MCF 10A (cell line): ENCODE measurements at regions of chr1 and their contacts with region 1.

Region 1: DNA sequence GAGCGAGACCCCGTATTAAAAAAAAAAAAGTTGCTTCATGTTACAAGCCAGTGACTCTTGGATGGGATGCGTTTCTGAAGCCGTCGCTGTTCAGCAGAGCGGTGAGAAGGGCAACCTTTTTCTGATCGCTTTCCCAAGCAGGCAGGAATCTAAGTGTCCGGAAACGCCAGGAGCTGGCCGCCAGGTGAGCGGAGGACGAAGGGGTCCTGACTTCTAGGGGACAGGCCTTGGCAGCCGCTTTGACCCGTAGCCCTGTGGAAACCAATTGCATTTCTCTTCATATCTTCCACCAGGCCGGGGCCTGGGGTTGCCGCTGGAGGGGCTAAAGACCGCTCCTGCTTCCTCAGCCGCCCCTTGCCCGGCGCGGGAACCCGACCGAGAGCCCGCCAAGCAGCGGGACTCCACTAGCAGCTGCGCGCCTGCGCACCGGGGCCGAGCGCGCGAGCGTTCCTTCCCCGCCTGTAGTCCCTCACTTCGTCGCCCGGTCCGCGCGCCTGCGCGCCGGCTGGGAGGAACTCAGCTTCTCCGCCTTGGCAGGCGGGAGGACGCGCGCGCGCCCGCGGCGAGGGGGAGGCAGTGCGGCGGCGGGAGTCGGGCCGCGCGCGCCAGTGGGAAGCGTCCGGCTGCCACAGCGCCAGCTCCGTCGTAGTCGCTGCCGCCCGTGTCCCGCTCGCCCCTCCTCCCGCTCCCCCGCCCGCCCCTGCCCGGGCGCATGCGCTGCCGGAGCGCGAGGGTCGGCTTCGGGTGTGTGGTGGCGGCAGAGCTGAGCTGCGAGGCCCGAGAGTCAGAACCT is at the start of gene SPEN:
- DNase-seq: peak; percentile 97
- H3K4me3 Mint-ChIP-seq: peak within 1 kb of the TSS; percentile 82
- H3K27ac Mint-ChIP-seq: peak within 1 kb of the TSS; percentile 97
- H3K4me1 Mint-ChIP-seq: peaks cover 19% of the 10 kb centered on the region
- H3K27me3 Mint-ChIP-seq: no peaks in the 10 kb centered on the region
- CTCF ChIP-seq: no peak
- total RNA-seq, gene SPEN: 44.2 and 50.6 TPM in 2 replicates

Region 2: GRCh38 chr1:15627343-15627988 is 219.8 kb before region 1 on chr1:
- CTCF ChIA-PET with region 1: no interaction called
- POLR2A ChIA-PET with region 1: no interaction called
- intact Hi-C with region 1: no loop called
- DNase-seq: no peak
- H3K4me3 Mint-ChIP-seq: no peak overlapping the region
- H3K27ac Mint-ChIP-seq: no peak overlapping the region
- H3K4me1 Mint-ChIP-seq: peaks cover 22% of the 10 kb centered on the region
- H3K27me3 Mint-ChIP-seq: no peaks in the 10 kb centered on the region
- CTCF ChIP-seq: no peak

Region 3: GRCh38 chr1:15703562-15703961 is 143.7 kb before region 1 on chr1:
- CTCF ChIA-PET with region 1: no interaction called
- POLR2A ChIA-PET with region 1: no interaction called
- intact Hi-C with region 1: no loop called
- DNase-seq: peak; percentile 86
- H3K4me3 Mint-ChIP-seq: peak overlapping the region; percentile 29
- H3K27ac Mint-ChIP-seq: peak overlapping the region; percentile 96
- H3K4me1 Mint-ChIP-seq: peaks cover 20% of the 10 kb centered on the region
- H3K27me3 Mint-ChIP-seq: no peaks in the 10 kb centered on the region
- CTCF ChIP-seq: no peak

Region 4: GRCh38 chr1:15741183-15741850 is 106.0 kb before region 1 on chr1:
- CTCF ChIA-PET with region 1: no interaction called
- POLR2A ChIA-PET with region 1: no interaction called
- intact Hi-C with region 1: no loop called
- DNase-seq: peak; percentile 86
- H3K4me3 Mint-ChIP-seq: no peak overlapping the region
- H3K27ac Mint-ChIP-seq: no peak overlapping the region
- H3K4me1 Mint-ChIP-seq: peaks cover 7% of the 10 kb centered on the region
- H3K27me3 Mint-ChIP-seq: no peaks in the 10 kb centered on the region
- CTCF ChIP-seq: peak; percentile 92

Region 5: GRCh38 chr1:15797614-15798390 is 49.5 kb before region 1 on chr1:
- CTCF ChIA-PET with region 1: interaction called, 6 read pairs
- POLR2A ChIA-PET with region 1: interaction called, 75 read pairs
- intact Hi-C with region 1: loop called (anchors 5 kb)
- DNase-seq: peak; percentile 84
- H3K4me3 Mint-ChIP-seq: peak overlapping the region; percentile 61
- H3K27ac Mint-ChIP-seq: peak overlapping the region; percentile 93
- H3K4me1 Mint-ChIP-seq: peaks cover 68% of the 10 kb centered on the region
- H3K27me3 Mint-ChIP-seq: no peaks in the 10 kb centered on the region
- CTCF ChIP-seq: no peak

Region 6: DNA sequence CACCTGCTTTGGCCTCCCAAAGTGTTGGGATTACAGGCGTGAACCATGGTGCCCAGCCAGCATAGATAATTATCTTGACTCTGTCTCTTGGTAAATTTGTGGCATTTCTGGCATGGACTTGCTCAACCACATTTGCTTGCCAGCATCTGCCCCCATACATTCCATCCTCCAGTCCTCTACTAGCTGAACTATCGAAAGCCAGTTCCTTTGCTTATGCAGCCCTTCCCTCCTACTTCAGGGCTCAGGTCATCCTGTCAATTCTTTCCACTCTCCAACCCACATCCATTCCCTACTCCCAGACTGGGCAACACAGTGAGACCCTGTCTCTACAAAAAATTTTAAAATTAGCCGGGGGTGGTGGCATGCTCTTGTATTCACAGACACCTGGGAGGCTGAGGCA is 26.8 kb before region 1 on chr1:
- CTCF ChIA-PET with region 1: interaction called, 7 read pairs
- POLR2A ChIA-PET with region 1: interaction called, 6 read pairs
- intact Hi-C with region 1: loop called (anchors 1 kb)
- DNase-seq: peak; percentile 59
- H3K4me3 Mint-ChIP-seq: no peak overlapping the region
- H3K27ac Mint-ChIP-seq: no peak overlapping the region
- H3K4me1 Mint-ChIP-seq: peaks cover 13% of the 10 kb centered on the region
- H3K27me3 Mint-ChIP-seq: no peaks in the 10 kb centered on the region
- CTCF ChIP-seq: no peak

Region 7: GRCh38 chr1:15885701-15886610 is 38.7 kb after region 1 on chr1:
- CTCF ChIA-PET with region 1: interaction called, 3 read pairs
- POLR2A ChIA-PET with region 1: interaction called, 58 read pairs
- intact Hi-C with region 1: loop called (anchors 5 kb)
- DNase-seq: peak; percentile 94
- H3K4me3 Mint-ChIP-seq: peak overlapping the region; percentile 74
- H3K27ac Mint-ChIP-seq: peak overlapping the region; percentile 79
- H3K4me1 Mint-ChIP-seq: peaks cover 18% of the 10 kb centered on the region
- H3K27me3 Mint-ChIP-seq: no peaks in the 10 kb centered on the region
- CTCF ChIP-seq: peak; percentile 33

Region 8: GRCh38 chr1:15949453-15950245 is 102.4 kb after region 1 on chr1:
- CTCF ChIA-PET with region 1: no interaction called
- POLR2A ChIA-PET with region 1: interaction called, 23 read pairs
- intact Hi-C with region 1: loop called (anchors 2 kb)
- DNase-seq: peak; percentile 95
- H3K4me3 Mint-ChIP-seq: peak overlapping the region; percentile 47
- H3K27ac Mint-ChIP-seq: peak overlapping the region; percentile 87
- H3K4me1 Mint-ChIP-seq: peaks cover 59% of the 10 kb centered on the region
- H3K27me3 Mint-ChIP-seq: no peaks in the 10 kb centered on the region
- CTCF ChIP-seq: no peak